CD8-positive, alpha-beta T cell (primary cell): ENCODE measurements at regions of chrX and their contacts with region 1.

Region 1: GRCh38 chrX:19887911-19888879 is 795 bp upstream of the SH3KBP1 start:
- DNase-seq: peak in 8 of 9 experiments; percentile 13 to 81 (median 37)
- ATAC-seq: peak; percentile 42
- H3K4me3 ChIP-seq: peak overlapping the region; percentile 37 to 59
- H3K4me3 Mint-ChIP-seq: peak overlapping the region; percentile 81
- H3K27ac ChIP-seq: peak overlapping the region; percentile 45 to 59
- H3K27ac Mint-ChIP-seq: peak overlapping the region; percentile 84
- H3K4me1 ChIP-seq: peaks cover 30% of the 10 kb centered on the region
- H3K4me1 Mint-ChIP-seq: peaks cover 42% of the 10 kb centered on the region
- H3K27me3 ChIP-seq: no peaks in the 10 kb centered on the region
- H3K27me3 Mint-ChIP-seq: no peaks in the 10 kb centered on the region
- CTCF ChIP-seq: no peak

Region 2: GRCh38 chrX:19372170-19372546 is 516.0 kb before region 1 on chrX:
- CTCF ChIA-PET with region 1: no interaction called
- POLR2A ChIA-PET with region 1: no interaction called
- intact Hi-C with region 1: loop called in 1 of 2 experiments (anchors 5 kb)
- DNase-seq: peak; percentile 31 to 77 (median 63)
- ATAC-seq: peak; percentile 73
- H3K4me3 ChIP-seq: peak overlapping the region; percentile 22 to 51
- H3K4me3 Mint-ChIP-seq: peak overlapping the region; percentile 90
- H3K27ac ChIP-seq: no peak overlapping the region
- H3K27ac Mint-ChIP-seq: no peak overlapping the region
- H3K4me1 ChIP-seq: no peaks in the 10 kb centered on the region
- H3K4me1 Mint-ChIP-seq: peaks cover 5% of the 10 kb centered on the region
- H3K27me3 ChIP-seq: no peaks in the 10 kb centered on the region
- H3K27me3 Mint-ChIP-seq: no peaks in the 10 kb centered on the region
- CTCF ChIP-seq: peak; percentile 78

Region 3: DNA sequence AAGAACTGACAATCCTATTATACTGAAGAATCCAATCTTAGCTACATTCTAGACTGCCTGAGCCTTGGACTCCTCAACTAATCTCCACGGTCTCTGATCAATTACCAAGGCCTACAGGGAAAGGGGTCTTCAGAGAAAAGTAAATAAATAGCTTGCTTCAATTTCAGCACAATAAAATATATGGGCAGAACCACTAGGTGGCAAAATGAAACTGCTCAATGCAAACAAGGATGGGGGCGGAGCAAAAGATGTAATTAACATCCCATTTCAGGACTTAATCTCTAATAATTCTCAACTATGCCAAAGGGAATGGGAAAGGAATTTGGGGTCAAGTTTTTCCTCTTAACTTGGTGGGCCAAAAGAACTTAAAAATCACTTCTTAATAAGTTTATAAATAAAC is 294.5 kb before region 1 on chrX:
- CTCF ChIA-PET with region 1: interaction called, 10 read pairs
- POLR2A ChIA-PET with region 1: no interaction called
- intact Hi-C with region 1: loop called (anchors 1 to 5 kb)
- DNase-seq: peak in 3 of 9 experiments; percentile 14 to 67 (median 48)
- ATAC-seq: peak; percentile 56
- H3K4me3 ChIP-seq: no peak overlapping the region
- H3K4me3 Mint-ChIP-seq: no peak overlapping the region
- H3K27ac ChIP-seq: no peak overlapping the region
- H3K27ac Mint-ChIP-seq: no peak overlapping the region
- H3K4me1 ChIP-seq: no peaks in the 10 kb centered on the region
- H3K4me1 Mint-ChIP-seq: peaks cover 15% of the 10 kb centered on the region
- H3K27me3 ChIP-seq: no peaks in the 10 kb centered on the region
- H3K27me3 Mint-ChIP-seq: no peaks in the 10 kb centered on the region
- CTCF ChIP-seq: no peak

Region 4: GRCh38 chrX:19739683-19740082 is 148.5 kb before region 1 on chrX:
- CTCF ChIA-PET with region 1: interaction called, 6 read pairs
- POLR2A ChIA-PET with region 1: interaction called, 3 read pairs
- intact Hi-C with region 1: loop called (anchors 1 to 2 kb)
- DNase-seq: peak in 7 of 9 experiments; percentile 10 to 71 (median 54)
- ATAC-seq: peak; percentile 44
- H3K4me3 ChIP-seq: no peak overlapping the region
- H3K4me3 Mint-ChIP-seq: no peak overlapping the region
- H3K27ac ChIP-seq: no peak overlapping the region
- H3K27ac Mint-ChIP-seq: peak overlapping the region; percentile 81
- H3K4me1 ChIP-seq: peaks cover 60% of the 10 kb centered on the region
- H3K4me1 Mint-ChIP-seq: peaks cover 76% of the 10 kb centered on the region
- H3K27me3 ChIP-seq: no peaks in the 10 kb centered on the region
- H3K27me3 Mint-ChIP-seq: no peaks in the 10 kb centered on the region
- CTCF ChIP-seq: peak; percentile 52

Region 5: GRCh38 chrX:19791562-19791961 is 96.6 kb before region 1 on chrX:
- CTCF ChIA-PET with region 1: interaction called, 3 read pairs
- POLR2A ChIA-PET with region 1: no interaction called
- intact Hi-C with region 1: loop called in 1 of 2 experiments (anchors 5 kb)
- DNase-seq: peak in 2 of 9 experiments; percentile 55 to 69
- ATAC-seq: peak; percentile 79
- H3K4me3 ChIP-seq: no peak overlapping the region
- H3K4me3 Mint-ChIP-seq: peak overlapping the region; percentile 61
- H3K27ac ChIP-seq: no peak overlapping the region
- H3K27ac Mint-ChIP-seq: peak overlapping the region; percentile 77
- H3K4me1 ChIP-seq: peaks cover 59% of the 10 kb centered on the region
- H3K4me1 Mint-ChIP-seq: peaks cover 70% of the 10 kb centered on the region
- H3K27me3 ChIP-seq: no peaks in the 10 kb centered on the region
- H3K27me3 Mint-ChIP-seq: no peaks in the 10 kb centered on the region
- CTCF ChIP-seq: no peak

Region 6: DNA sequence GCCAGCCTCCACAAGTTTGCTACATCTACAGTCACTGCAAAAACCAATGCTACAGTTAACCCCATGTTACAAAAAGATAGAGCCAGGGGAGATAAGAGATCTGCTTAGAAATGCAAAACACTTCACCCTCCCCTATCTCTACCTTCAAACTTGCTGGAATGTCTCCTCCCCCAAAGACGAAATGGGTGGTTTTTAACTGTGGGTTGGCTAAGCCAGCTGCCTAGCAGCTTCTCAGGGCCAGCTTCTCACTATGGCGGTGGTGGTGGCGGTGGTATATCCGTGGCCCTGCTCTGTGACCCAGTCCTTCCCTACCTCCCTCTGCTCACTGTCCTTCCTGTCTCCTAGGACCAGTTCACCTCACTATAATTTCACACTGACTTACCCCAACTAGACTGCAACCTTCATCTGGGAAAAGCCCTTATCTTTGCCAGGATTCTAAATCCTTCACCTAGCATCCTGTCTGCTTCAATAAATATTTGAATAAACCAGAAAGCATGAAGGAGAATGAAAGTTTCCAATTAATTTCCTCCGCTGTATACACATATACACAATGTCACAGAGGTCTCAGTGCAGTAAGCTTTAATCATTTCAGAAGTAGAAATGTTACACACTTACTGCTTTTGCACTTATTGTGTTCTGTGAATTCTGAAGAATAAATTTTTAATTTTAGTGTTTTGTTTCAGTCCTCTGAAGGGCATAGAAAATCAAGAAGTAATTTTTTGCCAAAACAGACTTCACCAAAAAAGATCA is 47.1 kb before region 1 on chrX:
- CTCF ChIA-PET with region 1: no interaction called
- POLR2A ChIA-PET with region 1: interaction called, 3 read pairs
- intact Hi-C with region 1: loop called (anchors 2 kb)
- DNase-seq: peak in 4 of 9 experiments; percentile 15 to 76 (median 52)
- ATAC-seq: no peak
- H3K4me3 ChIP-seq: peak overlapping the region in 1 of 2 experiments; percentile 16
- H3K4me3 Mint-ChIP-seq: peak overlapping the region; percentile 50
- H3K27ac ChIP-seq: peak overlapping the region in 1 of 2 experiments; percentile 54
- H3K27ac Mint-ChIP-seq: peak overlapping the region; percentile 89
- H3K4me1 ChIP-seq: peaks cover 23% of the 10 kb centered on the region
- H3K4me1 Mint-ChIP-seq: peaks cover 57% of the 10 kb centered on the region
- H3K27me3 ChIP-seq: no peaks in the 10 kb centered on the region
- H3K27me3 Mint-ChIP-seq: no peaks in the 10 kb centered on the region
- CTCF ChIP-seq: no peak

Region 7: GRCh38 chrX:20663336-20663735 is 775.1 kb after region 1 on chrX:
- CTCF ChIA-PET with region 1: no interaction called
- POLR2A ChIA-PET with region 1: no interaction called
- intact Hi-C with region 1: no loop called
- DNase-seq: no peak
- ATAC-seq: no peak
- H3K4me3 ChIP-seq: no peak overlapping the region
- H3K4me3 Mint-ChIP-seq: no peak overlapping the region
- H3K27ac ChIP-seq: no peak overlapping the region
- H3K27ac Mint-ChIP-seq: no peak overlapping the region
- H3K4me1 ChIP-seq: no peaks in the 10 kb centered on the region
- H3K4me1 Mint-ChIP-seq: no peaks in the 10 kb centered on the region
- H3K27me3 ChIP-seq: no peaks in the 10 kb centered on the region
- H3K27me3 Mint-ChIP-seq: peaks cover 2% of the 10 kb centered on the region
- CTCF ChIP-seq: no peak